ENCODE measurements at regions of chr12 and their contacts with region 1.

Region 1: DNA sequence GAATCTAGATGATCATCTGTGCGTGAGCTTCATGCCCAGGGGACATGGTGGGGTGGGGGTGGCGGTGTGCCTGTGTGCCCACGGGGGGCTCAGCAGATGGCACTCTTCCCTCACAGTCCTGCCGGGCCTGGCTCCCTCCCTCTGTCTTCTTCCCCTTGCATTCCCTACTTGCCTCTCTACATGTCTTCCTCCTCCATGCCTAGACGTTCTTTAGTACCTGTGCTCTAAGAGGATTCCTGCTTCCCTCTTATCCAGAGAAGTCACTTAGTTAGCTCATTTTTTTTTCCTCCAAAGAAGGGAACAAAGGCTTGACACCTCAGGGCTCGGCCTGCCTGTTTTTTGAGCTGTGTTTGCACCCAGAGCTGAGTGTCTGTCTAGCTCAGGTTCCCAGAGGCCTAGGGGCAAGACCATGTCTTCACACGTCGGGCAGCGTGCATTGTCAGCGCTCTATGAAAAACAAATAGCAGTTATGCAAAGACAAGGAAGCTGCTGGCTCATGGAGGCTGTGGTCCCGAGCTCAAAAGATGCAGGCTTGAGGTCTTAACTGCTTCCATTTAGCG is 48.8 kb downstream of the NINJ2 start:
- DNase-seq: peak in 2 of 3 donors; percentile 59 to 61
- H3K4me3 ChIP-seq: no peak overlapping the region
- H3K27ac ChIP-seq: no peak overlapping the region
- H3K4me1 ChIP-seq: peaks cover 13 to 86% (median 63%) of the 10 kb centered on the region in 4 experiments
- H3K27me3 ChIP-seq: no peaks in the 10 kb centered on the region

Region 2: DNA sequence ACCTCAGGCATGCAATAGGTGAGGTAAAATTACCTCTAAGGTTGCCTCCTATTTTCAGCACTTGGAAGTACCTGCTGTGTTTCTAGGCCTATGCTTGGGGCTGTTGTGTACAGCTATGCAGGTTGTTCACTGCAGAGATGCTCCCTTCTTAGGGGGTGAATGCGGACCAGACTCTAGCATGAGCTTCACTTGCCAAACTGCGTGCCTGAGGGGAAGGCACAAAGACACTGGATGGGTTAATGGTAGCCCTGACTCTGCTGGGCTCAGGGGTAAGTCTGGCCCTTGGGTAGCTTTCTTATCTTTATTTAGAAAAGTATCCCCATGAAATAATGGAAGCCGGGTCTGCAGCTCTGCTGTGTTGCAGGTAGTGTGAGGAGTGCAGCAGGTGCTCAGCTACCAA is 119.0 kb before region 1 on chr12:
- CTCF ChIA-PET with region 1: no interaction called
- POLR2A ChIA-PET with region 1: no interaction called
- DNase-seq: no peak
- H3K4me3 ChIP-seq: no peak overlapping the region
- H3K27ac ChIP-seq: no peak overlapping the region
- H3K4me1 ChIP-seq: no peaks in the 10 kb centered on the region
- H3K27me3 ChIP-seq: peaks cover 0 to 4% (median 0%) of the 10 kb centered on the region in 5 experiments

Region 3: DNA sequence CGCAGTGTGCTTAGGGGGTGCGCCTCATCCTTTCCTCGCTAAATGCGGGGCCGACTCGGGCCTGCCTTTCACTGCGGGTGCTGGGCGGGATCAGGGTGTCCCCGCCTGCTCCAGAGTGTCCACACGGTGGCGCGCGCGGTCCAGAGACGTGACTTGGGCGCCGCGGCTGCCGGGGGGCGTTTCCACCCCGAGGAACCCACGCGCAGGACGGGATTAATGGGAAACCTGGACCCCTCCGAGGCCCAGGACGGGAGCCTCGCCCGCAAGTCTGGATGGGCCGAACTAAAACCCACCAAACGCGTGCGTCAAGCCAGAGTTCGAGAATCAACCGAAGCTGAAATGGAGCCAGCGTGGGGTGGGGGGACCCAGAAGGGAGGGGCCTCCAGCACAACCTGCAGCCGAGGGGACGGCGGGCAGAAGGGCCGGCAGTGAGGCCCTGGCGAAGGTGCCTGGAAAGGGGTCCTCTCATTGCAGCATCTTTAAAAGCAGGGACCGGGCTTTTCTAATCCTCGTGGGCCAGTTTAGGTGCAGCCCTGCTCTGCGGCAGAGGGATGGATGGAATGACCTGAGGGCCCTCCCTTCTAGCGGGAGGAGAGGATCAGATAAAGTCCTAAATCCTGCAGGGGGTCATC is 44.6 kb before region 1 on chr12:
- CTCF ChIA-PET with region 1: interaction called, 116 read pairs
- POLR2A ChIA-PET with region 1: no interaction called
- DNase-seq: peak; percentile 78 to 84 (median 84)
- H3K4me3 ChIP-seq: peak overlapping the region; percentile 45 to 82 (median 67)
- H3K27ac ChIP-seq: peak overlapping the region in 1 of 2 experiments; percentile 14
- H3K4me1 ChIP-seq: peaks cover 0 to 32% (median 9%) of the 10 kb centered on the region in 4 experiments
- H3K27me3 ChIP-seq: no peaks in the 10 kb centered on the region

Region 4: GRCh38 chr12:575948-576612 is 38.4 kb before region 1 on chr12:
- CTCF ChIA-PET with region 1: interaction called, 116 read pairs
- POLR2A ChIA-PET with region 1: no interaction called
- DNase-seq: peak; percentile 66 to 86 (median 81)
- H3K4me3 ChIP-seq: peak overlapping the region in 3 of 7 experiments; percentile 34 to 62 (median 40)
- H3K27ac ChIP-seq: peak overlapping the region in 1 of 2 experiments; percentile 14
- H3K4me1 ChIP-seq: peaks cover 0 to 26% (median 16%) of the 10 kb centered on the region in 4 experiments
- H3K27me3 ChIP-seq: no peaks in the 10 kb centered on the region

Region 5: GRCh38 chr12:591167-592023 is 23.1 kb before region 1 on chr12:
- CTCF ChIA-PET with region 1: interaction called, 11 read pairs
- POLR2A ChIA-PET with region 1: interaction called, 7 read pairs
- DNase-seq: peak; percentile 95 to 99 (median 98)
- H3K4me3 ChIP-seq: peak overlapping the region in 3 of 7 experiments; percentile 36 to 40 (median 37)
- H3K27ac ChIP-seq: peak overlapping the region; percentile 72 to 88
- H3K4me1 ChIP-seq: peaks cover 4 to 38% (median 28%) of the 10 kb centered on the region in 4 experiments
- H3K27me3 ChIP-seq: no peaks in the 10 kb centered on the region

Region 6: DNA sequence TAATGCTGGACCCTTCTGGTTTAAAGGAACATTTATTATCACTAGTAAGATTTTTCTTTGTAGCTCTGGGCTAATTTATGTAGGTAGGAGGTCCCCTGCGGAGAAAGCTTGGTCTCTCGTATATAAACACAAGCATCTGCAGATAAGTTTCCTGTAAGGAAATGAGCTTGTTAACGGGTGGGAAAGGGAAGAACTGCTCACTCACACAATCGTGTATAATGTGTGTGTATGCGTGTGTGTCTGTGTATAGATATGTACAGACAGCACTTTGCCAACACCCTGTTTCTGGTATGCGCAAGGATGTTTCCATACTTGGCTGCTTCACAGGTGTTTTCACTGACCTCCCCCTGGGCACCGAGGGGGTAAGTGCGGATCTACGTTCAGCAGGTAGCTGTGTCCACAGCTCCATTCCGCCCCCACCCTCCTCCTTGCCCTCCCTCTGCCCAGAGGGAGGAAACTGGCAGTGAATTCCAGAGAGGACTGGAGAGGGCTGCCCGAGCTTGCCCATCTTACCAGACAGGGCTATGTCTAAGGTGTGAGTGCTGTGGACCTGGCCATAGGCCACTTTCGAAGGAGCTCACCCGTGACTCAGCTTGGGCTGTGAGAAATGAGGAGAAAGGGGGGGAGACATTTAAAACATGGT is 16.4 kb before region 1 on chr12:
- CTCF ChIA-PET with region 1: interaction called, 19 read pairs
- POLR2A ChIA-PET with region 1: interaction called, 7 read pairs
- DNase-seq: peak; percentile 64 to 90 (median 83)
- H3K4me3 ChIP-seq: peak overlapping the region in 5 of 7 experiments; percentile 10 to 63 (median 53)
- H3K27ac ChIP-seq: peak overlapping the region; percentile 83 to 89
- H3K4me1 ChIP-seq: peaks cover 12 to 46% (median 32%) of the 10 kb centered on the region in 4 experiments
- H3K27me3 ChIP-seq: no peaks in the 10 kb centered on the region

Region 7: GRCh38 chr12:642633-643474 is 28.4 kb after region 1 on chr12:
- CTCF ChIA-PET with region 1: interaction called, 19 read pairs
- POLR2A ChIA-PET with region 1: no interaction called
- DNase-seq: peak; percentile 83 to 89 (median 83)
- H3K4me3 ChIP-seq: peak overlapping the region; percentile 51 to 82 (median 73)
- H3K27ac ChIP-seq: peak overlapping the region; percentile 46 to 82
- H3K4me1 ChIP-seq: peaks cover 9 to 75% (median 48%) of the 10 kb centered on the region in 4 experiments
- H3K27me3 ChIP-seq: no peaks in the 10 kb centered on the region

Region 8: DNA sequence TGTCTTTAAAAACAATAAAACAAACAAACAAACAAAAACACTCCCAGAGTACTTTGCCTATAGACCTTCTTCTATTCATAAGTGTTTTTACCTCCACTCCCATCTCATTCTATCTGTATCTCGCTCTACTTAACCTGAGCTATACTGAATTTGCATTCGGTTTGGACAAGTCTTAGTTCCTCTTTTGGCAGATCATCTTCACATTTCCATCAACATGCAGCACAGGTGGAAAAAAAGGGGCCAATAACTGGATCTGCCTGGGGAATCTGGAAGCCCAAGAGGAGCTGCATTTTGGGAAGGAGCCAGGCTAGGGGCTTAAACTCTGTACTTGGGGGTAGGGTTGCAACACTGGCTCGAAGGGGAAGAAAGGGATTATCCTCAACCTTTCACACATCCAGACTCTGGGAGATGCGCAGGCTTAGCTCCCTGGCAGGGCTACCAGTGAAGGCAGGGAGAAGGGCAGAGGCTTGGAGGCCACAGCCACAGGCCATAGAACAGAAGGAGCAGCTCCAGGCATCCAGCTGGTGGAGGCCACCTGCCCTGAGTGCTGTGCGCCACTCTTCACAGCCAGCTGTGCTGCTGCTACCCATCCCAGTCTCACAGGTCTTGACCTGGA is 44.7 kb after region 1 on chr12:
- CTCF ChIA-PET with region 1: no interaction called
- POLR2A ChIA-PET with region 1: no interaction called
- DNase-seq: no peak
- H3K4me3 ChIP-seq: no peak overlapping the region
- H3K27ac ChIP-seq: no peak overlapping the region
- H3K4me1 ChIP-seq: peaks cover 3 to 32% (median 16%) of the 10 kb centered on the region in 4 experiments
- H3K27me3 ChIP-seq: no peaks in the 10 kb centered on the region

Region 9: GRCh38 chr12:716506-716905 is 102.0 kb after region 1 on chr12:
- CTCF ChIA-PET with region 1: no interaction called
- POLR2A ChIA-PET with region 1: no interaction called
- DNase-seq: peak in 2 of 3 donors; percentile 60 to 75
- H3K4me3 ChIP-seq: peak overlapping the region in 1 of 7 experiments; percentile 38
- H3K27ac ChIP-seq: no peak overlapping the region
- H3K4me1 ChIP-seq: peaks cover 5 to 44% (median 31%) of the 10 kb centered on the region in 4 experiments
- H3K27me3 ChIP-seq: no peaks in the 10 kb centered on the region

Region 10: GRCh38 chr12:810671-811415 is 196.4 kb after region 1 on chr12:
- CTCF ChIA-PET with region 1: interaction called, 68 read pairs
- POLR2A ChIA-PET with region 1: no interaction called
- DNase-seq: no peak
- H3K4me3 ChIP-seq: no peak overlapping the region
- H3K27ac ChIP-seq: no peak overlapping the region
- H3K4me1 ChIP-seq: peaks cover 0 to 20% (median 9%) of the 10 kb centered on the region in 4 experiments
- H3K27me3 ChIP-seq: no peaks in the 10 kb centered on the region

Region 11: DNA sequence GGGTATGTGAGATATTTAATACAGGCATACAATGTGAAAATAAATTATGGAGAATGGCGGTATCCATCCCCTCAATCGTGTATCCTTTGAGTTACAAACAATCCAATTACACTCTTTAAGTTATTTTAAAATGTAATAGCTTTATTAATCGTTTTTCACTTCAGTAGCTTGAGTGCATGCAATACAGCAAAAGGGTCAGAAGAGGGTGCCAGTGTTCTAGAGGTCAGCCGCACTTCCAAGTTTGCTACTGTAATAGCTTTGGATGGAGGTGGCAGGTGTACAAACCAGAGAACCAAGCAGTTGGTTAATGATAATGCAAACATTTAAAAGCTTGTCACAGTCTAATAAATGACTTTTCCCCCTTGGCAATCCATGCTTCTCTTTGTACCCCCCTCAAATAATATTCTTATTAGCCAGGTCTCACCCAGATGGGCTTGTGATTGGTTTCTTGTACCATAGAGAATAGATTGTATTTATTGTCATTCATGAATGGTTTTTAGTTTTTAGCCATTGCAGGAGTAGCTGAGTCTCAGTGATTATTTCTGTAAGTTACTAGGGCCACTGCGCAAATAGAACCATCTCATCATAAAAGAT is 503.6 kb after region 1 on chr12:
- CTCF ChIA-PET with region 1: no interaction called
- POLR2A ChIA-PET with region 1: no interaction called
- DNase-seq: peak; percentile 74 to 91 (median 85)
- H3K4me3 ChIP-seq: no peak overlapping the region
- H3K27ac ChIP-seq: no peak overlapping the region
- H3K4me1 ChIP-seq: no peaks in the 10 kb centered on the region
- H3K27me3 ChIP-seq: no peaks in the 10 kb centered on the region